WTC11 (cell line): ENCODE measurements at regions of chr15 and their contacts with region 1.

Region 1: DNA sequence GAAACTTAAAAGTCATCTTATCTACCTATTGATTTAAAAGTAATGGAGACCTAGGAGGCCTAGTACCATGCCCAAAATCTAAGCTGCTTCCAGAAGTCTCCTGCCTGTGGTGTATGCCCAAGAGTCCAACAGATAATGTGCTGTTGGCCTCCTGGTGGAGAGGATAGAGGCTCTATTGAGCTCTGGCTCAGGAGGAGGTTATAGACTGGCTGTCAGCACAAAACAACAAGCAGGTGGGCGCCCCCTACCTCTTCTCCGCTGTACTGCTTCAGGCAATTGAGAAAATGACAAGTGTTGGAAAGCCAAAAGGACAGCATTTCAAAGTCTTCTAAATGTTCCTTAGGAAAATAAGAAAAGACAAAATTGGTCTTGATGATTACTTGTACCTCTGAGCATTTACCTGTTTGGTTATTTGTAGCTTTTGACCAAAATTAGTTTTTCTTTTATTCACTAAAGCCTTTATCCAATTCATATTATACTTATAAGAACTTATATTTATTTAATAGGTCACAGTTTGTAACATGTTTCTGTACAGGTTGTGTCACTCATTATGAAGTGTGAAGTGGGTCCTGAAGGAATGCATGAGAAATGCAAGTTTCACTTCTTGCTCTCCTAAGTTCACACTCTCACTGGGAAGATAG is 17.2 kb upstream of the GNB5 start:
- DNase-seq: peak; percentile 86
- ATAC-seq: peak; percentile 98
- H3K4me3 Mint-ChIP-seq: no peak overlapping the region
- H3K27ac Mint-ChIP-seq: no peak overlapping the region
- H3K4me1 Mint-ChIP-seq: peaks cover 7% of the 10 kb centered on the region
- H3K27me3 Mint-ChIP-seq: no peaks in the 10 kb centered on the region
- CTCF ChIP-seq: peak; percentile 90

Region 2: GRCh38 chr15:52163321-52164190 is 44.9 kb before region 1 on chr15:
- CTCF ChIA-PET with region 1: interaction called, 29 read pairs
- POLR2A ChIA-PET with region 1: interaction called, 3 read pairs
- DNase-seq: peak; percentile 80
- ATAC-seq: peak; percentile 97
- H3K4me3 Mint-ChIP-seq: no peak overlapping the region
- H3K27ac Mint-ChIP-seq: no peak overlapping the region
- H3K4me1 Mint-ChIP-seq: peaks cover 7% of the 10 kb centered on the region; the same call in 1 of the 2 replicates
- H3K27me3 Mint-ChIP-seq: no peaks in the 10 kb centered on the region
- CTCF ChIP-seq: peak; percentile 44

Region 3: DNA sequence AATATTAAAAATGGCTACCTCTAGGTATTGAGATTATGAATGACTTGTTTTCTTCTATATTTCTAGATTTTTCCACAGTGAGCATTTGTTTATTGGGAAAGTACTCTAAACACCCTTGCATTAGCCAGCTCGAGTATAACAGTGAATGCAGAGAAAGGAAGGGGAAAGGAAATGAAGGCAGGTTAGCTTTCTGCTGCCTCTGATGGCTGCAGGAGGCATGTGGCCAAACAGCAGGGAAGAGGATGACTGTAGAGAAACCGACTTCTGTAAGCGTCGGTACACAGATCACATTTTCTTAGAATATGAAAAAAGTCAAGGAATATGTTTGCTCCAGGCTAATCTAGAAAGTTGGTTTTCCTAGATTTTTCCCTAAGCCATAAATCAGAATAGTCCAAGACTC is 37.0 kb before region 1 on chr15:
- CTCF ChIA-PET with region 1: interaction called, 19 read pairs
- POLR2A ChIA-PET with region 1: no interaction called
- DNase-seq: no peak
- ATAC-seq: peak; percentile 94
- H3K4me3 Mint-ChIP-seq: no peak overlapping the region
- H3K27ac Mint-ChIP-seq: no peak overlapping the region
- H3K4me1 Mint-ChIP-seq: peaks cover 9% of the 10 kb centered on the region
- H3K27me3 Mint-ChIP-seq: no peaks in the 10 kb centered on the region
- CTCF ChIP-seq: no peak

Region 4: GRCh38 chr15:52179278-52180195 is 28.9 kb before region 1 on chr15:
- CTCF ChIA-PET with region 1: interaction called, 80 read pairs
- POLR2A ChIA-PET with region 1: no interaction called
- DNase-seq: peak; percentile 89
- ATAC-seq: peak; percentile 87
- H3K4me3 Mint-ChIP-seq: peak overlapping the region; percentile 94
- H3K27ac Mint-ChIP-seq: peak overlapping the region; percentile 96
- H3K4me1 Mint-ChIP-seq: peaks cover 31% of the 10 kb centered on the region
- H3K27me3 Mint-ChIP-seq: peaks cover 22% of the 10 kb centered on the region
- CTCF ChIP-seq: no peak

Region 5: DNA sequence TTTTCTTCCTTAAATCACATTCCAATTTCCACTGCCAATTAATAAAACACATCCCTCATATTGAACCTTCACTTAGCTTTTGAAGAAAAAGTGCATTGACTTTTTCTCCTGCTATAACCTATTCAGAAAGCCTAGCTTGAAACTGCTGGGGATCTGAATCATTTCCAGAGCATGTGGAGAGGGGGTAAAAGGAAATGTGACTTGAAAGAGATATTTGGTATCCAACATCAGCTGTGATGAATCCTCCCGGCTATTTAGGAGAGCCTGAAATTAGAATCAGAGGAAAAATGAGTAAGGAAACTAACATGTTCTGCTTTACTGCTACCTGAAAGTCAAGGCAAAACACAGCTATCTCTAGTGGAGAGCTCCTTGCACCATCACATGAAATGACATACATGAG is 14.6 kb before region 1 on chr15:
- CTCF ChIA-PET with region 1: interaction called, 80 read pairs
- POLR2A ChIA-PET with region 1: no interaction called
- DNase-seq: no peak
- ATAC-seq: no peak
- H3K4me3 Mint-ChIP-seq: no peak overlapping the region
- H3K27ac Mint-ChIP-seq: no peak overlapping the region; the same call in 1 of the 2 replicates
- H3K4me1 Mint-ChIP-seq: peaks cover 2% of the 10 kb centered on the region; the same call in 1 of the 2 replicates
- H3K27me3 Mint-ChIP-seq: no peaks in the 10 kb centered on the region
- CTCF ChIP-seq: no peak